Naive thymus-derived CD4-positive, alpha-beta T cell (primary cell): ENCODE measurements at regions of chr6 and their contacts with region 1.

Region 1: DNA sequence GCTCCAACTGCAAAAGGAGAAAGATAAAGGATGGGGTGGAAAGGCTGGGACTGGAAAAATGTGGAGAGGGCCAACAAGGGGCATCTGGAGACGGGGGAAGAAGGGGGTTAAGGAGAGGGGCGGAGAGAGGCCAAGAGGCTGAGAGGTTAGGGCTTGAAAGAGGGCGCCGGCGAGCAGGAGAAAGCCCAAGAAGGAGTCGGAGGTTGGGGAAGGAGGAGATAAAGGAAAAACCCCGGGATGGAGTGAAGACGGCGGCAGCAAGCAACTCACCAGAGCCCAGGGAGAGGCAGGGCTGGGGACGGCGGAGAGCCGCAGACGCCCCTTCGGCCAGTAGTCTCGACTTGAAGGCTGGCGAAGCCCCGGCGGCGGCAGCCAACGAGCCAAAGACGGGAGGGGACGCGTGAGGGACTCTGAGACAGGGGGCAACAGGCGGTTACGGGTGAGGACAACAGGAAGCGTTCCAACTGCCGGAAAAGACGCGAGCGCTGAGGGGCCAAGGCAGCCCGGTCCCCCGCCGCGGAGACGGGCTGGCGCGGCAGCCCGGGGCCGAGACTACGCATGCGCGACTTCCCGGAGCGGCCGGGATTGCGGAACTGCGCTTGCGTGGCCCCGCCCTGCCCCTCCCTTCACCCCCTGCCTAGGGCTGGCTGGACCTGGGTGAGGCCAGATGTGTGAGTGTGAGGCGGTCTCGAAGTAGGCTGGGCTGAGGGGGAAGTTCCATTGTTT is at the start of gene STK38:
- DNase-seq: peak; percentile 79 to 93 (median 88)
- ATAC-seq: peak; percentile 90
- H3K4me3 ChIP-seq: peak within 1 kb of the TSS; percentile 98
- H3K4me3 Mint-ChIP-seq: peak within 1 kb of the TSS; percentile 96 to 99 (median 98)
- H3K27ac ChIP-seq: peak within 1 kb of the TSS; percentile 95
- H3K27ac Mint-ChIP-seq: peak within 1 kb of the TSS; percentile 89 to 99 (median 98)
- H3K4me1 ChIP-seq: peaks cover 29 to 38% of the 10 kb centered on the region in 2 donors
- H3K4me1 Mint-ChIP-seq: peaks cover 15 to 59% (median 42%) of the 10 kb centered on the region in 7 donors
- H3K27me3 ChIP-seq: no peaks in the 10 kb centered on the region
- H3K27me3 Mint-ChIP-seq: no peaks in the 10 kb centered on the region
- total RNA-seq, gene STK38: 68.5 to 193 (median 95.0) TPM

Region 2: GRCh38 chr6:36423101-36423824 is 123.8 kb before region 1 on chr6:
- CTCF ChIA-PET with region 1: no interaction called
- POLR2A ChIA-PET with region 1: interaction called, 7 read pairs
- intact Hi-C with region 1: loop called (anchors 1 to 2 kb)
- DNase-seq: peak; percentile 94 to 98 (median 97)
- ATAC-seq: peak; percentile 99
- H3K4me3 ChIP-seq: peak overlapping the region; percentile 70
- H3K4me3 Mint-ChIP-seq: peak overlapping the region; percentile 85 to 96 (median 94)
- H3K27ac ChIP-seq: peak overlapping the region; percentile 75
- H3K27ac Mint-ChIP-seq: peak overlapping the region; percentile 84 to 97 (median 93)
- H3K4me1 ChIP-seq: peaks cover 0 to 10% of the 10 kb centered on the region in 2 donors
- H3K4me1 Mint-ChIP-seq: peaks cover 10 to 21% (median 18%) of the 10 kb centered on the region in 7 donors
- H3K27me3 ChIP-seq: no peaks in the 10 kb centered on the region
- H3K27me3 Mint-ChIP-seq: no peaks in the 10 kb centered on the region

Region 3: DNA sequence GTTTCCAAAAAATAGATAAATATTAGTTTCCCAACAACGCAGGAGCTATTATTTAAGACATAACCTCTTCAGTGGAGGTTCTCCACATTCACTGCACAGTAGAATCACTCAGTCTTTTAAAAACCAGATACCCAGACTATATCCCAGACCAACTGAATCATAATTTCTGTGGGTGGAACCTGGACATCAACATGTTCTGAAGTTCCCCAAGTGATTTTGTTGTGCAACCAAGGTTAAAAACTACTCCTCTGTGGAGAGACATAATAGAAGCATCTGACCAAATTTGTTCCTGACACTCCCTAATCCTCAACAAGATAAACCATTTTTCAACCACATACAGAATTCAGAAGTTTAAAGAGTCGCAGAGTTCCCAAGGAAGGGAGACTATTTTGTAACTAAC is 42.1 kb before region 1 on chr6:
- CTCF ChIA-PET with region 1: no interaction called
- POLR2A ChIA-PET with region 1: interaction called, 14 read pairs
- intact Hi-C with region 1: loop called in 1 of 2 experiments (anchors 2 kb)
- DNase-seq: no peak
- ATAC-seq: no peak
- H3K4me3 ChIP-seq: no peak overlapping the region
- H3K4me3 Mint-ChIP-seq: peak overlapping the region in 2 of 10 donors; percentile 45 to 66
- H3K27ac ChIP-seq: no peak overlapping the region
- H3K27ac Mint-ChIP-seq: peak overlapping the region in 7 of 9 donors; percentile 59 to 95 (median 84)
- H3K4me1 ChIP-seq: peaks cover 13 to 38% of the 10 kb centered on the region in 2 donors
- H3K4me1 Mint-ChIP-seq: peaks cover 20 to 56% (median 48%) of the 10 kb centered on the region in 7 donors
- H3K27me3 ChIP-seq: no peaks in the 10 kb centered on the region
- H3K27me3 Mint-ChIP-seq: no peaks in the 10 kb centered on the region

Region 4: DNA sequence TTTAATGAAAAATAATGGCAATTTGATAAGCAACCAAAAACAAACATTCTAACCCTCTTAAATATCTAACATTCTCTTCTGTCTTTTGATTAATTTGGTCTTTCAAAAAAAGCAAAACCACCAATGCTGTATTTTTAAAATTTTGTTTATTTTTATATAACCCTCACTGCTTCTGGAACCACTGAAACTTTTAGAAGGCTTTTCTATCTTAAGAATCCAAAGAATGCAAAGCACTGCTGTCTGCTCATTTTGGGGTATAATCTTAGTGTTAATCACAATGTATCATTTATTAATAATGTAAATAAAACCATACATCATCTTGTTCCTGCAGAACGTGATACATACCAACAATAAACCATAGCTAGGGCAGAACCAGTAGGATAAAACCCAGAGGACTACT is 13.8 kb before region 1 on chr6:
- CTCF ChIA-PET with region 1: no interaction called
- POLR2A ChIA-PET with region 1: interaction called, 24 read pairs
- intact Hi-C with region 1: loop called in 1 of 2 experiments (anchors 1 kb)
- DNase-seq: no peak
- ATAC-seq: no peak
- H3K4me3 ChIP-seq: no peak overlapping the region
- H3K4me3 Mint-ChIP-seq: peak overlapping the region in 7 of 10 donors; percentile 8 to 62 (median 39)
- H3K27ac ChIP-seq: no peak overlapping the region
- H3K27ac Mint-ChIP-seq: peak overlapping the region in 6 of 9 donors; percentile 32 to 99 (median 72)
- H3K4me1 ChIP-seq: peaks cover 23 to 39% of the 10 kb centered on the region in 2 donors
- H3K4me1 Mint-ChIP-seq: peaks cover 37 to 89% (median 75%) of the 10 kb centered on the region in 7 donors
- H3K27me3 ChIP-seq: no peaks in the 10 kb centered on the region
- H3K27me3 Mint-ChIP-seq: no peaks in the 10 kb centered on the region

Region 5: GRCh38 chr6:36576561-36576960 is 29.5 kb after region 1 on chr6:
- CTCF ChIA-PET with region 1: interaction called, 7 read pairs
- POLR2A ChIA-PET with region 1: interaction called, 22 read pairs
- intact Hi-C with region 1: loop called in 1 of 2 experiments (anchors 2 kb)
- DNase-seq: no peak
- ATAC-seq: no peak
- H3K4me3 ChIP-seq: no peak overlapping the region
- H3K4me3 Mint-ChIP-seq: no peak overlapping the region
- H3K27ac ChIP-seq: no peak overlapping the region
- H3K27ac Mint-ChIP-seq: no peak overlapping the region
- H3K4me1 ChIP-seq: no peaks in the 10 kb centered on the region
- H3K4me1 Mint-ChIP-seq: peaks cover 0 to 16% (median 14%) of the 10 kb centered on the region in 7 donors
- H3K27me3 ChIP-seq: no peaks in the 10 kb centered on the region
- H3K27me3 Mint-ChIP-seq: no peaks in the 10 kb centered on the region

Region 6: DNA sequence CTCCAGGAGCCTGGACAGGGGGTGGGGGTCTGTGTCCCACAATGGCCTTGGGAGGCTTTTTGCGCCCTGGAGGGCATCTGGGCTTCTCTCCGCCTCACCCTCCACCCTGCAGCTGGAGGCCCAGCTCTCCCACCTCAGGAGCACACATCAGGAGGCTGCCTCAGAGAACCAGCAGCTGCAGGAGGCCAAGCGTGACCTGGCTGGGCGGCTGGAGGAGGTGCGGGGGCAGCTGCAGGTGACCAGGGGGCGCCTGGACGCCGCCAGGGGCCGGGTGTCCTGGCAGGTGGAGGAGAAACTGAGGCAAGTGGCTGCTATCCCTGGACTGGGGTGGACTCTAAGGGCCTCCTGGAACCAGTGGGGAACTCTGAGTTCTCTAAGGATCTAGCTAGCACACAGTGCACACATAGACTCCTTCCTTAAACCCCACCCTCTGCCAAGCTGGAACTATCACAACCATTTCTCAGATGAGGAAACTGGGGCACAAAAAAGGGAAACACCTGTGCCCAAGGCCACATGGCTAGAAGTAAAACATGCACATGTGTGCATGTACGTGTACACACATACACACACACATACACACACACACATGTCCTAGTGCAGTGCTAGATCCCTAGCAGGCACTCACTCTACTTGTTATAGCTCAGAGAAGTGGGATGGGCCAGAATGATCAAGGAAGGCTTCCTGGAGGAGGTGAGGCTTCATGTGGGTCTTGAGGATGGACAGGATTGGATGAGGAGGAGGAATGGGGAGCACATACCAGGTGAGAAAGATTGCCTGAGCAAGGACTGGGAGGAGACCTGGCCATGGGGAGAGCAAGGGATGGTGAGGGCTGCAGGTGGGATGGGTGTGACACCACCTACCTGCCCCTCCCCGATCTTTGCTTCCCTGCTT is 173.4 kb after region 1 on chr6:
- CTCF ChIA-PET with region 1: no interaction called
- POLR2A ChIA-PET with region 1: no interaction called
- intact Hi-C with region 1: no loop called
- DNase-seq: no peak
- ATAC-seq: no peak
- H3K4me3 ChIP-seq: no peak overlapping the region
- H3K4me3 Mint-ChIP-seq: no peak overlapping the region
- H3K27ac ChIP-seq: no peak overlapping the region
- H3K27ac Mint-ChIP-seq: peak overlapping the region in 1 of 9 donors; percentile 2
- H3K4me1 ChIP-seq: no peaks in the 10 kb centered on the region
- H3K4me1 Mint-ChIP-seq: peaks cover 0 to 12% (median 0%) of the 10 kb centered on the region in 7 donors
- H3K27me3 ChIP-seq: no peaks in the 10 kb centered on the region
- H3K27me3 Mint-ChIP-seq: peaks cover 0 to 4% (median 0%) of the 10 kb centered on the region in 5 donors